Activated CD4-positive, alpha-beta T cell treated with anti-CD3 and anti-CD28 coated beads for 36 hours (primary cell): ENCODE measurements at regions of chrX and their contacts with region 1.

Region 1: DNA sequence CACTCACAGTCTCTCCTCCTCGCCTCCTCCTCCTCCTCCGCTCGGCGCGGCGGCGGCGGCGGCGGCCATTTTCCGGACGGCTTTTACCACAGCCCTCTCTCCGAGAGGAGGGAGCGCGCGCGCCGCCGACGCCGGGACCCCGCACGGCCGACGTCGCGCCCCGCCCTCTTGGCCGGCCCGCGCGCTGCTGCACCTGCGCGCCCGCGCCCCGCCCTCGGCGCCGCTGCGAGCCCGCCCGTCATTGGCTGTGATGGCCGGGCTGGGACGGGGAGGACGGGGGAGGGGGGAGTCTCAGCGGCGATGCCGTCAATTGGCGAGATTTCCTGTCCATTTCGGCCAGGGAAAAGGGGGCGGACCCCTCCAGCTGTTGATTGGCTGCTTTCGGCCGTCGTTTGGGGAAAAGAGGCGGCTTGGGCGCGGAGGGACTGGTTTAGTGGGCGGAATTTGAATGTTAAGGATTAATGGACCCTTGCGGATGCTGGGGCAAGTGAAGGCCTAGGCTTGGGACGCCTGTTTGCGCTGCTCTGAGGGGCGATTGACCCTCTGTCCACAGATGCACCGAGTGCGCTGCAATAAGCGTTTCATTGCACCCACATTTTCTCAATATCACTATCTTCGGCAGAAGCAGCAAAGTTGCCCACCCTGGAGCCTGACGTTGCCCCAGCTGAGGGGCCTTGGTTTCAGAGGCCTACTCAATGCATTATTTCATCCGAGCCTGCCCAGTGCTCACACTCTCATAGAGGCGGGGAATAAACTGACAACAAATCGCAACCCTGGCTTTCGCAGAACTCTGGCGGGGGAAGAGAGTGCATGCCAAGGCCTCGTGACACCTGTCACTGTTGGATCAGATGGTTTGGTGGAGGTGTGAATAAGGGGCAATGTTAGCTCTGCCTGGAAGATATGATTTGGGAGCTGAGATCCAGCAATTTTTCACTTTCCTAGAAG is at the start of gene MECP2:
- DNase-seq: peak; percentile 93
- ATAC-seq: peak; percentile 87
- H3K4me3 Mint-ChIP-seq: peak within 1 kb of the TSS; percentile 81
- H3K27ac Mint-ChIP-seq: peak within 1 kb of the TSS; percentile 96
- H3K4me1 Mint-ChIP-seq: peaks cover 56% of the 10 kb centered on the region
- H3K27me3 Mint-ChIP-seq: peaks cover 2% of the 10 kb centered on the region
- total RNA-seq, gene MECP2: 50.7 to 60.0 TPM

Region 2: GRCh38 chrX:153724252-153725040 is 373.4 kb before region 1 on chrX and contains the starts of genes ABCD1 and BCAP31:
- CTCF ChIA-PET with region 1: interaction called, 4 read pairs
- POLR2A ChIA-PET with region 1: no interaction called
- intact Hi-C with region 1: loop called in 1 of 2 experiments (anchors 10 kb)
- DNase-seq: peak; percentile 93
- ATAC-seq: peak; percentile 84
- H3K4me3 Mint-ChIP-seq: peak within 1 kb of the TSS; percentile 89
- H3K27ac Mint-ChIP-seq: peak within 1 kb of the TSS; percentile 87
- H3K4me1 Mint-ChIP-seq: peaks cover 20% of the 10 kb centered on the region
- H3K27me3 Mint-ChIP-seq: no peaks in the 10 kb centered on the region
- total RNA-seq, gene ABCD1: 4.5 to 4.8 TPM
- total RNA-seq, gene BCAP31: 78.0 to 106 TPM

Region 3: DNA sequence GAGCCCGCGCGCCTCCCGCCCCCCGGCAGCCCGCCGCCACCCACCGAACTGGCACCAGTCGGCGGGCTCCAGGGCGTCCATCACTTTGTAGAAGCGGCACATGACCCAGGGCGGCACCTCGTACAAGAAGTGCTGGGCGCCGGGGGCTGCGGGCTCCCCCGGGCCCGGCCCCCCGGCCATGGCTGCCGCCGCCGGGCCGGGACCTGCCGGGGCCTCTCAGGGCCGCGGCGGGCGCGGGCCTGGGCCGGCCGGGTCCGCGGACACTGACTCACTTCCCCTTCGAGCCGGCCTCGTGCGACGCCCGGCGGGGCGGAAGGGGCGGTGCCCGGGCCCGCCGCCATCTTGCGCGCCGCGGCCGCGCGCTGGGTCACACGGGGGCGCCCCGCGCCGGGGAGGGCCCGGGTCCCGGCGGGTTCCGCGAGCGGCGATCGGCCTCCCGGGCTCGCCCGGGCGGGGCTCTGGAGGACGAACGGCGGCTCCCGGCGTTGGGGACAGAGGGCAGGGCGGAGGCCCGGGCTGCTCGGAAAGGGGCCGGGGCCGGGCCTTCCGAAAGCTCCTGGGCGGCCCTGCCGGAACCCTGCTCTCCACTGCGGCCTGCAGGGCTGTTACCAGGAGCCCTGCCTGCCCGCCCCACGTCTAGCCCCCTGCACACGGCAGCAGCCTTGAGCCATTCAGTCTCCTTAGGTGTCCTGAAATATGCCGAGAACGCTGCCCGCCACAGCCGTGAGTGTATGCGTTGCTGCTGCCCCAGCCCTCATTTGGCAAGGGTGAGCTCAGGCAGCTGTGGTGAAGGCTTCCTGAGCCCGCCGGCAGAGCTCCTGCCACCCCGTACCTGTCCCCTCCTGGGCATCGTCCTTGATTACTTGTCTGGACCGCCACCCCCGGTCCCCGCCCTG is 78.0 kb before region 1 on chrX and contains the start of gene IRAK1:
- CTCF ChIA-PET with region 1: interaction called, 3 read pairs
- POLR2A ChIA-PET with region 1: no interaction called
- intact Hi-C with region 1: loop called in 1 of 2 experiments (anchors 2 kb)
- DNase-seq: peak; percentile 73
- ATAC-seq: peak; percentile 61
- H3K4me3 Mint-ChIP-seq: peak within 1 kb of the TSS; percentile 87
- H3K27ac Mint-ChIP-seq: peak within 1 kb of the TSS; percentile 90
- H3K4me1 Mint-ChIP-seq: peaks cover 14% of the 10 kb centered on the region
- H3K27me3 Mint-ChIP-seq: no peaks in the 10 kb centered on the region
- total RNA-seq, gene IRAK1: 84.3 to 93.6 TPM

Region 4: DNA sequence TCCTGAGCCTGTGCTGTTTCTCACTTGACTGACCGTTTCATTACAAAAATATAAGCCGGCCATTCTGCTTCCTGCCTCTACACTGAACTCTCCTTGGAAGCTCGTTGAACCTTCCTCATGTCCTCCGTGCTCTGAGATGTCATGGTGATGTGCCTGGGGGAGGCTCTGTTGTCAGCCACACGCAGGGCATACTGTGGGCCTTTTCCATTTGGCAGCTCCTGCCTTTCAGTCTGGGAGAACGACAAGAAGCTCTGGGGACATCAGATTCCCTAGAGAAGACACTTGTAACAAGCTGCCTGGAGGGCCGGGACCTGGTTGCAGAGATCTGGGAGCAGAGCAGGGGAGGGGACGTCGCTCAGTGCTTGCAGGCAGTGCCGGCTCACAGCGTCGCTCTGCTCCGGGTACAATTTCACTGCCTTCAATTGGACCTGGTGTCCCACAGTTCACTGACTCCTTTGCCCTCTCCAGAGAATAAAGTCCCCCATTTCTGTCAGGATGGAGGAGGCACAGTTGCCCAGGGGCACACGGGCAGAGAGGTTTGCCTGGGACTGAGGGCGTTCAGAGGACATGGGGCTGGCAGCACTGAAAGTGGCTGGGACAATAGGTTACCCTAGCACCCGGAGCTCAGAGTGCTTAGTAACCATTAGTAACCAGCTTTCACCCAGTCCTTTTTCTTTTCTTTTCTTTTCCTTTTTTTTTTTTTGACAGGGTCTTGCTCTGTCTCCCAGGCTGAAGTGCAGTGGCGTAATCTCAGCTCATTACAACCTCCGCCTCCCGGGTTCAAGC is 18.8 kb after region 1 on chrX:
- CTCF ChIA-PET with region 1: no interaction called
- POLR2A ChIA-PET with region 1: no interaction called
- intact Hi-C with region 1: no loop called
- DNase-seq: no peak
- ATAC-seq: no peak
- H3K4me3 Mint-ChIP-seq: no peak overlapping the region
- H3K27ac Mint-ChIP-seq: no peak overlapping the region
- H3K4me1 Mint-ChIP-seq: peaks cover 5% of the 10 kb centered on the region
- H3K27me3 Mint-ChIP-seq: no peaks in the 10 kb centered on the region

Region 5: DNA sequence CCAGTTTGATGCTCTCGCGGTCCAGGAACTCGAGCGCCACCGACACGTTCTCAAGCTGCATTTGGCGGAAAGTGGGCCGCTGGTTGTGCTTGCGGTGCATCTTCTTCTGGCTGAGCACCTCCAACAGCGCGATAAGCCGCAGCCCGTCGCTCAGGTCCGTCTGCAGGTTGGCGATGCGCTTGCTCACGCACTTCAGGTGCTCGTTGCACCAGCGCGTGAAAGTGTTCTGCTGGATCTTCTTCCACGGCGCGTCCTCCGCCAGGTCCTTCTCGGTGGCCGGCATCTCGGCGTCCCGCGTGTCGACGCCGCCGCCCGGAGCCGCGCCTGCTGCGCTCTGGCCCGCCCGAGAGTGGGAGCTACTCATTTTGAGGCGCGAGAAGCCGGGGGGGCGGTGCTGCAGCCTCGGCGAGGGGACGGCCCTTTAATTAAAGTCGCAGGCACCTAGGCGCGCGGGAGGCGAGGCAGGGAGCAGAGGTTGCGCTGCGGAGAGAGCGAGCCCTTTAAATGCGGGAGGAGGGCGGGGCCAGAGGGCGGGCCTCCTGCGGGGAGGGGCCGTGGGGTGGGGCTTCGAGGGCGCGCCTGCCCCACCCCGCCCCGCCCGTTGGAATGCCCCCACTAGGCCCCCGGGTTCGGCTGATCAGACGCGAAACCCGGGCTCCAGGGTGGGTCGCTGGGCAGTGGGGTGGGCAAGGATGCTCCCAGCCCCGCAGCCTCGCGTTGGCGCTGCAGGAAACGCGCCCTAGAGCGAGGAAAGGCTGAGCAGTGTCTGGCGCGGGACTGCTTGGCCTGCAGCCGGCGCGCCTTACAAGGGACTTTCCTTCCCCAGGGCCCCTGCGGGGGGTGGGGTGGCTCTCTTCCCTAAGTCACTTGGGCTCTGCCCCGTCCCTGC is 273.3 kb after region 1 on chrX:
- CTCF ChIA-PET with region 1: no interaction called
- POLR2A ChIA-PET with region 1: no interaction called
- intact Hi-C with region 1: loop called in 1 of 2 experiments (anchors 2 kb)
- DNase-seq: peak; percentile 96
- ATAC-seq: peak; percentile 55
- H3K4me3 Mint-ChIP-seq: peak overlapping the region; percentile 86
- H3K27ac Mint-ChIP-seq: peak overlapping the region; percentile 55
- H3K4me1 Mint-ChIP-seq: peaks cover 22% of the 10 kb centered on the region
- H3K27me3 Mint-ChIP-seq: no peaks in the 10 kb centered on the region

Region 6: GRCh38 chrX:154478728-154479622 is 381.1 kb after region 1 on chrX and contains the start of gene LAGE3:
- CTCF ChIA-PET with region 1: no interaction called
- POLR2A ChIA-PET with region 1: no interaction called
- intact Hi-C with region 1: loop called in 1 of 2 experiments (anchors 1 kb)
- DNase-seq: peak; percentile 97
- ATAC-seq: peak; percentile 96
- H3K4me3 Mint-ChIP-seq: peak within 1 kb of the TSS; percentile 80
- H3K27ac Mint-ChIP-seq: peak within 1 kb of the TSS; percentile 90
- H3K4me1 Mint-ChIP-seq: peaks cover 24% of the 10 kb centered on the region
- H3K27me3 Mint-ChIP-seq: no peaks in the 10 kb centered on the region
- total RNA-seq, gene LAGE3: 34.7 to 43.0 TPM